Caco-2 (cell line): ENCODE measurements at regions of chr10 and their contacts with region 1.

Region 1: GRCh38 chr10:121662945-121663917 is 65.0 kb upstream of the FGFR2 start:
- DNase-seq: peak in 1 of 2 experiments; percentile 60
- H3K4me3 ChIP-seq: no peak overlapping the region
- H3K4me3 Mint-ChIP-seq: no peak overlapping the region
- H3K27ac Mint-ChIP-seq: no peak overlapping the region
- H3K4me1 ChIP-seq: no peaks in the 10 kb centered on the region; the same call in 1 of the 2 replicates
- H3K4me1 Mint-ChIP-seq: peaks cover 5% of the 10 kb centered on the region
- H3K27me3 ChIP-seq: no peaks in the 10 kb centered on the region
- H3K27me3 Mint-ChIP-seq: no peaks in the 10 kb centered on the region
- CTCF ChIP-seq: peak; percentile 32 to 46

Region 2: GRCh38 chr10:121680879-121681672 is 17.8 kb after region 1 on chr10:
- CTCF ChIA-PET with region 1: no interaction called
- POLR2A ChIA-PET with region 1: no interaction called
- intact Hi-C with region 1: loop called (anchors 2 kb)
- DNase-seq: peak in 1 of 2 experiments; percentile 16
- H3K4me3 ChIP-seq: no peak overlapping the region
- H3K4me3 Mint-ChIP-seq: peak overlapping the region; percentile 6
- H3K27ac Mint-ChIP-seq: peak overlapping the region; percentile 77
- H3K4me1 ChIP-seq: peaks cover 28% of the 10 kb centered on the region
- H3K4me1 Mint-ChIP-seq: peaks cover 25% of the 10 kb centered on the region
- H3K27me3 ChIP-seq: no peaks in the 10 kb centered on the region
- H3K27me3 Mint-ChIP-seq: no peaks in the 10 kb centered on the region
- CTCF ChIP-seq: peak in 1 of 2 experiments; percentile 12